ENCODE measurements at regions of chr6 and their contacts with region 1.

Region 1: DNA sequence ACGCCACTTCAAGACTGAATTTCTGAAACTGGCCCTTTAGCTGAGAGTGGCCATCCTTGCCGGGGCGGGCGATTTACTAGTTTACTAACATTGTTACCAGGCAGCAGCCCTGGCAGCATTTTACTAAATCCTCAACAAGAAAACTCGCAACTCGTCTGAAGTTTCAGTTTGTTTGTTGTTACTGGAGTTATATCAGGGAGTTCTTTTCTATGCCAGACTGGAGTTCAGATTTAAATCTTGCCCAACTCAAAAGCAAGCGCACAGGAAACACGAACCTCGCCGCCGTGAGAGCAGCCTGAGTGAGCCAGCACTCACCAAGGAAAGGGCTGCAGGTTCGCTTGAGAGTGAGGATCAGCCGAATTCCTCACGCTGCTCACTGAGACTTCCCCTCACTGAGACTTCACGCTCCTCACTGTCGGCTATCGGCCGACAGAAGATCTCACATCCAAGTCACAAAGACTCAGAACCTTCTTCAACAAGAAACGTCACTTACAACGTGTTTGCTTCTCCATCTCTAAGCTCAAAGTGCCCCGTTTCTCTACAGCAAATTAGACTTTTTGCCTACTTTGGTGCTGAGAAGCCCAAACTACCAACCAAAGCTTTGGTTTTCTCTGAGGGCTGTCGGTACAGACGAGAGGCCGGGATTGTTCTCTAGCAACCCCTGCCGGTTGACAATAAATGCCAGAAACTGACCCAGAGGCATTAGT is 78.9 kb downstream of the OLIG3 start:
- DNase-seq: peak; percentile 62 to 76 (median 73)
- H3K4me3 ChIP-seq: peak overlapping the region; percentile 48 to 53
- H3K4me3 Mint-ChIP-seq: peak overlapping the region; percentile 83 to 93 (median 88)
- H3K27ac ChIP-seq: peak overlapping the region; percentile 60
- H3K27ac Mint-ChIP-seq: peak overlapping the region; percentile 79 to 97 (median 92)
- H3K4me1 ChIP-seq: peaks cover 10% of the 10 kb centered on the region
- H3K4me1 Mint-ChIP-seq: peaks cover 6 to 20% (median 14%) of the 10 kb centered on the region in 4 donors
- H3K27me3 ChIP-seq: no peaks in the 10 kb centered on the region
- H3K27me3 Mint-ChIP-seq: no peaks in the 10 kb centered on the region

Region 2: GRCh38 chr6:137094411-137095008 is 320.8 kb before region 1 on chr6:
- CTCF ChIA-PET with region 1: interaction called, 10 read pairs
- POLR2A ChIA-PET with region 1: no interaction called
- intact Hi-C with region 1: loop called (anchors 1 kb)
- DNase-seq: peak; percentile 55 to 59 (median 57)
- H3K4me3 ChIP-seq: no peak overlapping the region
- H3K4me3 Mint-ChIP-seq: peak overlapping the region in 3 of 8 donors; percentile 13 to 42 (median 27)
- H3K27ac ChIP-seq: no peak overlapping the region
- H3K27ac Mint-ChIP-seq: peak overlapping the region in 3 of 7 donors; percentile 42 to 67 (median 61)
- H3K4me1 ChIP-seq: peaks cover 19% of the 10 kb centered on the region
- H3K4me1 Mint-ChIP-seq: peaks cover 12 to 26% (median 15%) of the 10 kb centered on the region in 4 donors
- H3K27me3 ChIP-seq: no peaks in the 10 kb centered on the region
- H3K27me3 Mint-ChIP-seq: peaks cover 3 to 4% of the 10 kb centered on the region in 2 donors

Region 3: GRCh38 chr6:137271245-137272183 is 143.8 kb before region 1 on chr6:
- CTCF ChIA-PET with region 1: interaction called, 10 read pairs
- POLR2A ChIA-PET with region 1: no interaction called
- intact Hi-C with region 1: loop called (anchors 1 kb)
- DNase-seq: peak in 4 of 5 donors; percentile 26 to 36 (median 33)
- H3K4me3 ChIP-seq: no peak overlapping the region
- H3K4me3 Mint-ChIP-seq: no peak overlapping the region
- H3K27ac ChIP-seq: no peak overlapping the region
- H3K27ac Mint-ChIP-seq: no peak overlapping the region
- H3K4me1 ChIP-seq: peaks cover 6% of the 10 kb centered on the region
- H3K4me1 Mint-ChIP-seq: peaks cover 2 to 19% (median 12%) of the 10 kb centered on the region in 4 donors
- H3K27me3 ChIP-seq: no peaks in the 10 kb centered on the region
- H3K27me3 Mint-ChIP-seq: no peaks in the 10 kb centered on the region

Region 4: GRCh38 chr6:137363805-137364138 is 51.5 kb before region 1 on chr6:
- CTCF ChIA-PET with region 1: interaction called, 9 read pairs
- POLR2A ChIA-PET with region 1: interaction called, 21 read pairs
- intact Hi-C with region 1: no loop called
- DNase-seq: peak in 4 of 5 donors; percentile 62 to 74 (median 69)
- H3K4me3 ChIP-seq: no peak overlapping the region
- H3K4me3 Mint-ChIP-seq: peak overlapping the region; percentile 7 to 77 (median 68)
- H3K27ac ChIP-seq: no peak overlapping the region
- H3K27ac Mint-ChIP-seq: peak overlapping the region in 6 of 7 donors; percentile 12 to 90 (median 72)
- H3K4me1 ChIP-seq: peaks cover 27% of the 10 kb centered on the region
- H3K4me1 Mint-ChIP-seq: peaks cover 26 to 38% (median 32%) of the 10 kb centered on the region in 4 donors
- H3K27me3 ChIP-seq: no peaks in the 10 kb centered on the region
- H3K27me3 Mint-ChIP-seq: no peaks in the 10 kb centered on the region

Region 5: GRCh38 chr6:137625796-137626195 is 210.5 kb after region 1 on chr6:
- CTCF ChIA-PET with region 1: no interaction called
- POLR2A ChIA-PET with region 1: no interaction called
- intact Hi-C with region 1: no loop called
- DNase-seq: no peak
- H3K4me3 ChIP-seq: no peak overlapping the region
- H3K4me3 Mint-ChIP-seq: no peak overlapping the region
- H3K27ac ChIP-seq: no peak overlapping the region
- H3K27ac Mint-ChIP-seq: no peak overlapping the region
- H3K4me1 ChIP-seq: no peaks in the 10 kb centered on the region
- H3K4me1 Mint-ChIP-seq: no peaks in the 10 kb centered on the region
- H3K27me3 ChIP-seq: peaks cover 6% of the 10 kb centered on the region
- H3K27me3 Mint-ChIP-seq: peaks cover 9 to 22% of the 10 kb centered on the region in 2 donors

Region 6: GRCh38 chr6:137641474-137642077 is 226.3 kb after region 1 on chr6:
- CTCF ChIA-PET with region 1: interaction called, 6 read pairs
- POLR2A ChIA-PET with region 1: interaction called, 3 read pairs
- intact Hi-C with region 1: loop called (anchors 1 kb)
- DNase-seq: peak; percentile 58 to 66 (median 64)
- H3K4me3 ChIP-seq: no peak overlapping the region
- H3K4me3 Mint-ChIP-seq: no peak overlapping the region
- H3K27ac ChIP-seq: no peak overlapping the region
- H3K27ac Mint-ChIP-seq: no peak overlapping the region
- H3K4me1 ChIP-seq: peaks cover 10% of the 10 kb centered on the region
- H3K4me1 Mint-ChIP-seq: peaks cover 6 to 15% (median 12%) of the 10 kb centered on the region in 4 donors
- H3K27me3 ChIP-seq: no peaks in the 10 kb centered on the region
- H3K27me3 Mint-ChIP-seq: peaks cover 4 to 5% of the 10 kb centered on the region in 2 donors

Region 7: DNA sequence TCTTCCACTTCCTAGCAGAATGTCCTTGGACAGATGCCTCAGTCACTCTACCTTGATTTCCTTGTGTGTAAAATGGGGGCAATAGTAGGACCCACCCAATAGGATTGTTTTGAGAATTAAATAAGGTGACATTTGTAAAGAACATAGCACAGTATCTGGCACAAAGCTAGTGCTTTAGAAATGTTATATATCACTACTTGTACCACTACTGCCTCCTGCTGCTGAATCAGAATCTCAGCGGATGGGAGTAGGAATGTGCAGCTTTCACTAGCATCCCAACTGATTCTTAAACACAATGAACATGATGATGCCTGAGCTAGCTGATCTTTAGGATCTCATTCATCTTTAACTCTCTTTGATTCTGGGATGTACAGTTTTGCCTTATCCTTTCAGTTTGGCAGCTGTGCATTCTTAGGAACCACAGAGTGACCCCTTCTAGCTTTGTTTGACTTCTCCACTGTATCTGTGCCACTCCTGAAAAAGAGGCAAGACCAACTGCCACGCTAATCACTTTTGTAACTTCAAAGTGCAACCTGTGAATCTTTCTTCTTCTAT is 795.8 kb after region 1 on chr6:
- CTCF ChIA-PET with region 1: no interaction called
- POLR2A ChIA-PET with region 1: no interaction called
- intact Hi-C with region 1: no loop called
- DNase-seq: no peak
- H3K4me3 ChIP-seq: no peak overlapping the region
- H3K4me3 Mint-ChIP-seq: no peak overlapping the region
- H3K27ac ChIP-seq: no peak overlapping the region
- H3K27ac Mint-ChIP-seq: no peak overlapping the region
- H3K4me1 ChIP-seq: no peaks in the 10 kb centered on the region
- H3K4me1 Mint-ChIP-seq: no peaks in the 10 kb centered on the region
- H3K27me3 ChIP-seq: no peaks in the 10 kb centered on the region
- H3K27me3 Mint-ChIP-seq: peaks cover 10 to 23% of the 10 kb centered on the region in 2 donors